Heart left ventricle (tissue), 16 donors: ENCODE measurements at regions of chr17 and their contacts with region 1.

Region 1: DNA sequence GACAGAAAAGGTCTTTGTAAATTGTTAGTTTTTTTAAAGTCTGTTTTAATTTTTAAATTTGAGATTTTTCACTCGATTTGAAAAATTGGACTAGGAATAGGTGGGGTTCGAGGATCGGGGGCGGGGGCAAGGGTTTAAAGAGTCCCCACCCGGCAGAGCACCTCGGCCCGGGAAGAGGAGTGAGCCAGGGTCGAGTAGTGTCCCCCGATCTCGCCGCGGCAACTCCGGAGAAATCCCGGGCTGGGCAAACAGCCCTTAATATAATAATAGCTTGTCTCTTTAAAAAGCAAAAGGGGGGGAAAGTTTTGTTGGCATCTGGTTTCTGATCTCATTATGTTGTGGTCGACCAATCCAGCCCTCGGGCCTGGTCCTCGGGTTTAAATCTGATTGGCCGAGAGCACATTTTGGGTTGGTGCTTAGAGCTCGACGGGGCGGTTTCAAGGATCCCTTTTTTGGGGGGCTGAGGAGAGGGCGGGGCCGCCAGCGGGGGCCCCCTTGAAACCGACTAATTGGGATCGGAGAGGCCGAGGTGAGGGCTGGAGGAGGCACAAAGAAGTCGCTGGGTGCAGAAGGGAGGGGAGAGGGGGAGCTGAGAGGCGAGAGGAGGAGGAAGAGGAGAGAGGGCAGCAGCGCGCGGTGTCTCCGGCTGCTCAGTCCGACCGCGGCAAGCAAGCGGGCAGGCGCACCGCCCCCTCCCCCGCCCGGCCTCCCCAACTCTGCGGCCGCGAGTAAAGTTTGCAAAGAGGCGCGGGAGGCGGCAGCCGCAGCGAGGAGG is at the start of gene FZD2:
- DNase-seq: peak; percentile 88 to 92 (median 89)
- ATAC-seq: peak; percentile 93 to 97 (median 96)
- H3K4me3 ChIP-seq: peak within 1 kb of the TSS; percentile 41 to 77 (median 64)
- H3K27ac ChIP-seq: peak within 1 kb of the TSS in 11 of 12 donors; percentile 23 to 94 (median 75)
- H3K4me1 ChIP-seq: peaks cover 0 to 30% (median 8%) of the 10 kb centered on the region in 12 donors
- H3K27me3 ChIP-seq: peaks cover 0 to 13% (median 0%) of the 10 kb centered on the region in 9 donors
- CTCF ChIP-seq: no peak
- POLR2A ChIP-seq: peak in 1 of 2 donors; percentile 18
- total RNA-seq, gene FZD2: 1.6 to 8.1 (median 4.5) TPM

Region 2: GRCh38 chr17:44585315-44585714 is 28.3 kb after region 1 on chr17:
- intact Hi-C with region 1: loop called in 1 of 10 experiments (anchors 1 kb)
- DNase-seq: no peak
- ATAC-seq: no peak
- H3K4me3 ChIP-seq: no peak overlapping the region
- H3K27ac ChIP-seq: peak overlapping the region in 1 of 12 donors; percentile 19
- H3K4me1 ChIP-seq: peaks cover 0 to 31% (median 15%) of the 10 kb centered on the region in 12 donors
- H3K27me3 ChIP-seq: no peaks in the 10 kb centered on the region
- CTCF ChIP-seq: no peak
- POLR2A ChIP-seq: no peak

Region 3: DNA sequence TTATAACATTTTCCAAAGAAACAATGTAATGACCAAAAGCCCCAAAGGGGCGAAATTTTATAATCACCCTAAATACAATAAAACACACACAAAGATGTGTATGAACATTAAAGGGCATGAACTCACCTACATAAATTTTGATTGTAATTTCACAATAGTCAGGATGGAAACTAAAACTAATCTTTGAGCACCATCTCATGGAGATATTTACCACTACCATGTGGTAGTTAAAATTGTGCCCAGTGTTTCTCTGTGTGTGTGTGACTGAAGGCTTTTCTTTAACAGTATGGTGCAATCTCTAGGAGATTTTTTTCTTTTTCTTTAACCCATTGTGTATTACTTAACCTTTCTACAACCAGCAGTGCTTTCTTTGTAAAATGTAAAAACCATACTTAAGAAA is 79.5 kb after region 1 on chr17:
- intact Hi-C with region 1: loop called in 1 of 10 experiments (anchors 5 kb)
- DNase-seq: no peak
- ATAC-seq: peak in 3 of 4 donors; percentile 58 to 71 (median 70)
- H3K4me3 ChIP-seq: no peak overlapping the region
- H3K27ac ChIP-seq: no peak overlapping the region
- H3K4me1 ChIP-seq: no peaks in the 10 kb centered on the region
- H3K27me3 ChIP-seq: no peaks in the 10 kb centered on the region
- CTCF ChIP-seq: peak in 11 of 12 donors; percentile 22 to 66 (median 46)
- POLR2A ChIP-seq: no peak